OCI-LY7 (cell line): ENCODE measurements at regions of chr13 and their contacts with region 1.

Region 1: DNA sequence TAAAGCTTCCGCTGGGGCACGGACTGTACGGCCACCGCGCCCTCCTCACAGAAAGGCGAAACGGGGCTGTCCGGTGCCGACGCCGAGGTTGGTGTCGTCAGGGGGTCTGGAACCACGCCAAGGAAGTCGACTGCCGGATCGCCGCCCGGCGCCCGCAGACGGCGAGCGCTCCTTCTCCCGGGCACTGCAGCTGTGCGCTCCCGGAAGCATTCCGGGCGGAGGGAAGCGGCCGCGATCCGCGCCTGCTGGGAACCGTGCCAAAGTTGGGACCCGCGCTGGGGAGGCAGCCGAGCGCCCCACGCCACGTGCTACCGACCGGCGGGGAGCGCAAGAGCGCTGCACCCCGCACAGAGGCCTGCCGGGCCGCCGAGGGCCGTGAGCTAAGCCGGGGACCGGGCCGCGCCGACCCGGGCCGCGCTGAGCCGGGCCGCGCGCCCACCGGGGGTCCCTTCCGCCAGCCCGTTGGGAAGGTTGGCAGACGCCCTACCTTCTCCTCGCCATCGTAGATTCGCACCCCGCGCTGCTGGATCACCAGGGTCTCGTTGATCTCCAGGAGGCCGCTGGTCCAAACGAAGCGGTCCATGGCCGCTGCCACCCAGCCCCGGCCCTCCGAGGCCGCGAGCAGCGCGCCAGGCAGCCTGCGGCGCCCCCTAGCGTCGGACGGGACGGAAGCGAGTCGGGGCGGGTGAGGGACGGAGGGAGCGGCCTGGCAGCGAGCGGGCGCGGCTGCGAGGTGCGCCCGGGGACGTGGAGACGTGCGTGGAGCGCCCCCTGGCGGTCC is at the start of gene VPS36:
- DNase-seq: peak; percentile 95
- H3K4me3 ChIP-seq: peak within 1 kb of the TSS; percentile 75
- H3K27ac ChIP-seq: peak within 1 kb of the TSS; percentile 34
- H3K4me1 ChIP-seq: peaks cover 28% of the 10 kb centered on the region
- CTCF ChIP-seq: peak; percentile 91
- total RNA-seq, gene VPS36: 26.5 and 35.9 TPM in 2 replicates

Region 2: DNA sequence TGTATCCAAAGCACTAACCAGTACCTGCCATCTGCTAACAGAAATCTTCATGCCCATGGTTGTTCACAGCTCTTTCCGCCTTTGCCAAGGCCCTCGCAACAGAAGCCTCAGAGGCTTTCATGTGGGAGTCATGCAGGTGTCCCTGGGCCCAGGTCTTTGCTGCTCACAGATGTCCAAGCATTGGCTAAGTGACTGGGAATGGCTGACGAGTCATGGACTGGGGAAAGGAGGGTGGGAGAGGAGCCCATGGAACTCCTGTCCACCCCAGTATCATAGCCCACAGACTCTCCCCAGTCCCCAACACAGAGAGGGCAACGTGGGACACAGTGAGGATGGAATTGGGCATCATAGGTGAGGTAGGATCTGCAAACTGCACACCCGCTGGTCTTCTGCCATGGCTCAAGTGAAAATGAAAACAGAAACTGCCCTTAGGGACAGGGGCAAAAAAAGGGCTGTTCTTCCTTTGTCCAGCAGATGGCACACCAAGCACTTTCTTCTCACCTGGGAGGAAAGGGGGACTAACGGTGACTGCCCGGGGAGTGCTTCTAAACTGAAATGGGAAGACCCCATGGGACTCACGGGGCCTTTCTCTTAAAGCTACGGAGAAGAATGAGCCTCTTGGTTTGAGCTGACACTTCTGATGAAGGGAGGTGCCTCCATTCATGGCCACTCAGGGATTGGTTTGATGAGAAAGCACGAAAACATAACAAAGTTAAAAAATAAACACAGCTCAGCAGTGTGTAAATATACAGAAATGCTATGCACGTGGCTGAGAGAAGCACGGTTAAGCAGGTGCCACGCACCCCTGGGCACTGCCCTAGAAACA is 635.2 kb before region 1 on chr13:
- CTCF ChIA-PET with region 1: no interaction called
- POLR2A ChIA-PET with region 1: no interaction called
- intact Hi-C with region 1: loop called (anchors 5 kb)
- DNase-seq: peak; percentile 90
- H3K4me3 ChIP-seq: peak overlapping the region; percentile 47
- H3K27ac ChIP-seq: peak overlapping the region; percentile 39
- H3K4me1 ChIP-seq: peaks cover 82% of the 10 kb centered on the region
- CTCF ChIP-seq: peak; percentile 96

Region 3: DNA sequence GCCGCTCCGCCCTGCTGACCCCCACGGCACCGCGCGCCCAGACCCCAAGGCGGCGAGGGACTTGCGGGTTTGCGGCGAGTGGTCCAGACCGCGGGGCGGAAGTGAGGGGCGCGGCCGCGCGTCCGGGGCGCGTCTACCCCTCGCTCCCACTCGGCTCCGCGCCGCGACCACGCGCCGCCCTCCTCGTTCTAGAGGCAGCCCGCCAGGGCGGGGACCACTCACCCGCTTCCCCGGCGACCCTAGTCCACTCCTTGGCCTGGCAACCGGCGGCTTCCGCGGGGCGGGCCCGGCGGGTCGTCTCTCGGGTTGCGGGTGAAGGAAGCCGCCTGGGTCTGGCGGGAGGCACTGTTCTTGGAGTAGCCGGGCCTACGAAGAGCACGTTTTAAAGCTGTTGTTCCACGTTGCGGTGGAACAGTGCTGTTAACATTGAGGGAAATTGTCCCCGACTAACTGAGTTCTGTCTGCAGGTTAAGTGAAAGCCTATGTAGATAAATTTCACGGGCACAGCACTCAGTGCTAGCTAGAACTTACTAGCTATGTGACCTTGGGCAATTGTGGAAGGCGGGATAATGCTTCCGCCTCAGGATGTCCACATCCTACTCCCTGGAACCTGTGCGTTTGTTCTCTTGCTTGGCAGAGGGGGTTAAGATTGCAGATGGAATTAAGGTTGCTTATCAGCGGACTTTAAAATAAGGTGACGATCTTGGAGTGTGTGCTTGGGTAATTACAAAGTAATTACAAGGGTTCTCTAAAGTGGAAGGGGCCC is 290.7 kb before region 1 on chr13 and contains the start of gene NEK3:
- CTCF ChIA-PET with region 1: no interaction called
- POLR2A ChIA-PET with region 1: no interaction called
- intact Hi-C with region 1: loop called (anchors 10 kb)
- DNase-seq: peak; percentile 83
- H3K4me3 ChIP-seq: peak within 1 kb of the TSS; percentile 84
- H3K27ac ChIP-seq: peak within 1 kb of the TSS; percentile 7
- H3K4me1 ChIP-seq: peaks cover 14% of the 10 kb centered on the region
- CTCF ChIP-seq: no peak
- total RNA-seq, gene NEK3: 18.2 and 28.4 TPM in 2 replicates

Region 4: DNA sequence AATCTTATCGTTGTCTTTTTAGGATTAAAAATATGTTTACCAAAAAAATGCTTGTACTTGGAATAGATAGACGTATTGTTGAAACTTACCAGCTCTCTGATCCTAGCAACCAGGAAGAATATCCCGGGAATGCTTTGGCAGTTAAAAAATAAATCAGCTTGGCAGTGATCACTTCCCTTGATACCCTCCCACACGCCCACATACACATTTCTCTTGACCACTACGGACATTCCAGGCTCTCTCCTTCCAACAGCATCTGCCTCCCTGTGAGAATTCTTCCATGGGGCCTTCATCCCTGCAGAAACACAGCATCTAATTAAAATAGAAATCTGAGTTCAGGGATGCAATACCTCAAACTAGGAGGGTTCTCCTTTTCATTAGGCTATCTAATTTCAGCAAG is 102.1 kb before region 1 on chr13:
- CTCF ChIA-PET with region 1: interaction called, 3 read pairs
- POLR2A ChIA-PET with region 1: no interaction called
- intact Hi-C with region 1: loop called (anchors 1 kb)
- DNase-seq: no peak
- H3K4me3 ChIP-seq: no peak overlapping the region
- H3K27ac ChIP-seq: no peak overlapping the region
- H3K4me1 ChIP-seq: no peaks in the 10 kb centered on the region
- CTCF ChIP-seq: no peak

Region 5: GRCh38 chr13:52428295-52428694 is 21.9 kb before region 1 on chr13:
- CTCF ChIA-PET with region 1: no interaction called
- POLR2A ChIA-PET with region 1: no interaction called
- intact Hi-C with region 1: no loop called
- DNase-seq: no peak
- H3K4me3 ChIP-seq: no peak overlapping the region
- H3K27ac ChIP-seq: no peak overlapping the region
- H3K4me1 ChIP-seq: no peaks in the 10 kb centered on the region
- CTCF ChIP-seq: no peak

Region 6: GRCh38 chr13:52652196-52652979 is 202.2 kb after region 1 on chr13 and contains the start of gene SUGT1:
- CTCF ChIA-PET with region 1: no interaction called
- POLR2A ChIA-PET with region 1: no interaction called
- intact Hi-C with region 1: loop called (anchors 1 kb)
- DNase-seq: peak; percentile 97
- H3K4me3 ChIP-seq: peak within 1 kb of the TSS; percentile 96
- H3K27ac ChIP-seq: peak within 1 kb of the TSS; percentile 87
- H3K4me1 ChIP-seq: peaks cover 34% of the 10 kb centered on the region
- CTCF ChIP-seq: peak; percentile 76
- total RNA-seq, gene SUGT1: 32.1 and 36.6 TPM in 2 replicates